Activated naive CD4-positive, alpha-beta T cell treated with anti-CD3 and anti-CD28 coated beads for 36 hours (primary cell): ENCODE measurements at regions of chr13 and their contacts with region 1.

Region 1: GRCh38 chr13:76886292-76887075 is at the start of gene KCTD12:
- DNase-seq: peak; percentile 70
- H3K4me3 Mint-ChIP-seq: peak within 1 kb of the TSS; percentile 89
- H3K27ac Mint-ChIP-seq: peak within 1 kb of the TSS; percentile 78
- H3K4me1 Mint-ChIP-seq: peaks cover 28% of the 10 kb centered on the region
- H3K27me3 Mint-ChIP-seq: peaks cover 7% of the 10 kb centered on the region
- total RNA-seq, gene KCTD12: 6.2 to 6.4 TPM

Region 2: GRCh38 chr13:75549262-75550158 is 1337.0 kb before region 1 on chr13 and contains the start of gene UCHL3:
- CTCF ChIA-PET with region 1: no interaction called
- intact Hi-C with region 1: loop called (anchors 2 kb)
- DNase-seq: peak; percentile 98
- H3K4me3 Mint-ChIP-seq: peak within 1 kb of the TSS; percentile 87
- H3K27ac Mint-ChIP-seq: peak within 1 kb of the TSS; percentile 94
- H3K4me1 Mint-ChIP-seq: peaks cover 40% of the 10 kb centered on the region
- H3K27me3 Mint-ChIP-seq: no peaks in the 10 kb centered on the region
- total RNA-seq, gene UCHL3: 37.3 to 37.6 TPM

Region 3: DNA sequence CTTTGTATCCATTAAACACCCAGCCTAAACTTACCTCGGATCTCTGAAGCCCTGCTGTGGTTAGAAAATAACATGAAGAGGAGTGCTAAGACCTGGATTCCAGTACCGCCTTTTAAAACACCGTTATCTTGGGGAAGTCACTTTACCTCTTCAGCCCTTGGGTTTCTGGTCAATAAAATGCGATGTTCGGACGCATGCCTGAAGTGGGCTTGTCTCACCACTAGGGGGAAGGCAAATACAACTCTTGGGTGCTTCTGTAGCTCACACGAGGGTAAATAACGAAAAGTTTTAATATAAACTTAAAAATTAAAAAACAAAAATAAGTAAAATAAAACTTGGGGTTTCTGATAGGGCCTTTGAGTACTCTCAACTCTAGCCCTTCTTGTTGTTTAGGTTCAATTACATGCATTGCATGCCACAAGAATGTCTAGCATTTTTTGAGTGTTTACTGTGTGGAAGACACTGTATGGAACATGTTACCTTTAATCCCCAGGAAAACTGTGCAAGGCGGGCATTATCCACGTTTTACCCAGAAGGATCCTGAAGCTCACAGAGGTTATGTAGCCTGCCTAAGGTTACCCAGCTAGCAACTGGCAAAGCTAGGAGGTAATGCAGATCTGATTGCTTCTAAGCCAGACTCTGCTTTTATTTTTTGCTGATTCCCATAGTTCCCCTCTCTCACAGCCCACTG is 1010.0 kb before region 1 on chr13:
- CTCF ChIA-PET with region 1: no interaction called
- intact Hi-C with region 1: loop called (anchors 5 kb)
- DNase-seq: peak; percentile 76
- H3K4me3 Mint-ChIP-seq: no peak overlapping the region
- H3K27ac Mint-ChIP-seq: no peak overlapping the region
- H3K4me1 Mint-ChIP-seq: peaks cover 10% of the 10 kb centered on the region
- H3K27me3 Mint-ChIP-seq: no peaks in the 10 kb centered on the region

Region 4: DNA sequence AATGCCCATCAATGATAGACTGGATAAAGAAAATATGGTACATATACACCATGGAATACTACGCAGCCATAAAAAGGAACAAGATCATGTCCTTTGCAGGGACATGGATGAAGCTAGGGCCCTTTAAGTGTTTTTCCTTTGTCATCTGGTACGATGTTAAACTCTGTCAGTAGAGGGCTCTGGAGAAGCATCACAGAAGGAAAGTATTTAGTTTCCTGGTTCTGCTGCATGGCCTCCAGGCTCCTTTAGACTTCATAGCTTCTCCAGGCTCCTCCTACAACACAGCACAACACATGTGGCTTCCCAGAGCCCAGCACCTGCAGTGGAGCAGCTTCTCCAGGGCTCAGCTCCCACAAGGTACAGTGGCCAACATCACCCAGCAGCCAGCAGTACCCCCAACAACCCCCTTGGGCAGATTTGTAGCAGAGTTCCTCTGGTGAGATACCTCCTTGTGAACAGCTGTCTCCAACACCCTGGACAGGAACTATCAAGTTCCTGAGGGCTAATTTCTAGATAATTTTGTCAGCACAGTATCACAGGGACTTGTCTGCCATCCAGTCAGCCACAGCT is 63.7 kb before region 1 on chr13:
- CTCF ChIA-PET with region 1: interaction called, 17 read pairs
- intact Hi-C with region 1: loop called (anchors 1 kb)
- DNase-seq: peak; percentile 19
- H3K4me3 Mint-ChIP-seq: no peak overlapping the region
- H3K27ac Mint-ChIP-seq: no peak overlapping the region
- H3K4me1 Mint-ChIP-seq: peaks cover 2% of the 10 kb centered on the region
- H3K27me3 Mint-ChIP-seq: no peaks in the 10 kb centered on the region

Region 5: GRCh38 chr13:76846363-76846762 is 40.1 kb before region 1 on chr13:
- CTCF ChIA-PET with region 1: no interaction called
- intact Hi-C with region 1: no loop called
- DNase-seq: no peak
- H3K4me3 Mint-ChIP-seq: no peak overlapping the region
- H3K27ac Mint-ChIP-seq: no peak overlapping the region
- H3K4me1 Mint-ChIP-seq: no peaks in the 10 kb centered on the region
- H3K27me3 Mint-ChIP-seq: peaks cover 3% of the 10 kb centered on the region

Region 6: GRCh38 chr13:77026818-77027585 is 140.5 kb after region 1 on chr13 and contains the start of gene FBXL3:
- CTCF ChIA-PET with region 1: interaction called, 3 read pairs
- intact Hi-C with region 1: loop called (anchors 2 kb)
- DNase-seq: peak; percentile 83
- H3K4me3 Mint-ChIP-seq: peak within 1 kb of the TSS; percentile 91
- H3K27ac Mint-ChIP-seq: peak within 1 kb of the TSS; percentile 93
- H3K4me1 Mint-ChIP-seq: peaks cover 42% of the 10 kb centered on the region
- H3K27me3 Mint-ChIP-seq: no peaks in the 10 kb centered on the region
- total RNA-seq, gene FBXL3: 27.1 to 27.4 TPM

Region 7: DNA sequence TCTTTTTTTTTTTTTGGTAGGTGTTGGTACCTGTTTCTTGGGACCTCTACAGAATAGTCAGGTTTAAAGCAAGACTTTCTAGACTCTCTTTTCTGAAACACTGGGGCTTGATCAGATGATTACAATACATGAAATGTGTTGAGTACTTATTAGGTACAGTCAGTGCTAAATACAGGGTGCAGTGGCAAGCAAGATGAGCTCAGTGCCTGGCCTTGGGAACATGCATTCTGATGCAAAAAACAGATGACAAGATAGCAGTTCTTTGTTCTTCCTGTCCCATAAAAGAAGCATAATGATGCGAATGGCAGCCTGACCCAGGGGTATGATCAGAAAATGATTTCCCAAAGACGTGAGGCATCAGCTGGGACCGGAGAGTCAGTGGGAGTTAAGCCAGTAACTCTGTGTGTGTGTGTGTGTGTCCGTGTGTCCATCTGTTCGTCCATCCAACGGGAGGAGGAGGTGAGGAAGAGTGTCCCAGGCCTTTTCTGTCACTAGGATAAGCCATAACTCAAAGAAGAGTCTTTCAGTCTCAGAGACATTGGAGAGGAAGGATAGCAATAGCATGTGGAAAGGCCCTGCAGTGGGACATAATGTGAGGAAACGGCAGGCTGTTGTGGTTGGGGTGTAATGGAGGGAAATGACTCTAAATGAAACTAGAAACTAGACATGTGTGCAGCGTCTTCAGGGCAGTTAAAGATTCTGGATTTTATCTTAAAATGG is 843.2 kb after region 1 on chr13:
- CTCF ChIA-PET with region 1: no interaction called
- intact Hi-C with region 1: loop called (anchors 10 kb)
- DNase-seq: peak; percentile 69
- H3K4me3 Mint-ChIP-seq: no peak overlapping the region
- H3K27ac Mint-ChIP-seq: peak overlapping the region; percentile 57
- H3K4me1 Mint-ChIP-seq: peaks cover 31% of the 10 kb centered on the region
- H3K27me3 Mint-ChIP-seq: no peaks in the 10 kb centered on the region